B cell (primary cell): ENCODE measurements at regions of chr11 and their contacts with region 1.

Region 1: GRCh38 chr11:63652671-63653070 is 18.5 kb downstream of the ATL3 start:
- DNase-seq: no peak
- ATAC-seq: no peak
- H3K4me3 ChIP-seq: no peak overlapping the region
- H3K4me3 Mint-ChIP-seq: no peak overlapping the region
- H3K27ac ChIP-seq: no peak overlapping the region
- H3K27ac Mint-ChIP-seq: no peak overlapping the region
- H3K4me1 ChIP-seq: no peaks in the 10 kb centered on the region
- H3K4me1 Mint-ChIP-seq: peaks cover 2% of the 10 kb centered on the region
- H3K27me3 ChIP-seq: no peaks in the 10 kb centered on the region
- H3K27me3 Mint-ChIP-seq: no peaks in the 10 kb centered on the region
- CTCF ChIP-seq: no peak

Region 2: DNA sequence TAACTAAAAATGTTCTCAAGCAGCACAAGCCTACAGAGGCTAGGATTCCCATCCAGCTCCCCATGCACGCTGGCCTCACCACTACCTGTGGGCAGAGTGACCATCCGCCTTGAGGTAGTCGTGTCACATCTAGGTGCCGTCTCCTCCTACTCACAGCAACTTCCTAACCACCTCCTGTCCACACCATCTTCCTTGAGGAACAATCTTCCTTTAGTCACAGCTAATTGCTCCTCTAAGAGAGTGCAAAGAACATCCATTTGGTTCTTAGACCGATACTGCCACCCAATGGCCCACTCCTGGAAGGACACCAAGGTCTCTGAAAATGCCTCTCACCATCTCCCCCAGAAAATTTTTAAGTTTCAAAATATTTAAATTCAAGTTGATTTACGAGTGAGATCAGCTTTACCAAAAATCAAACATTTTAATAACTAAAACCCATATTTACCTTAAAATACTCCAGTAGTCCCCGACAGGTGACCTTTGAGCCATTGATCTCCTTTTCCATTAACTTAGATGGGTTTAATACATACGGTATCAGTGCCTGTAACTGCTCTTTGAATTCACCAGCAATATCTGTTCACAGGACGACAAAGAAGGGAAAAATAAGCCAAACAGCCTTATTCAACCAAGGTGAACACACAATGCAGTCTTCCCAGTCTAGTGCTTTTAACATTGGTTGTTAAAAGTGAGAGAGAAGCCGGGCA is 16.8 kb before region 1 on chr11:
- CTCF ChIA-PET with region 1: interaction called, 12 read pairs
- POLR2A ChIA-PET with region 1: no interaction called
- intact Hi-C with region 1: no loop called
- DNase-seq: peak; percentile 75
- ATAC-seq: peak; percentile 72
- H3K4me3 ChIP-seq: no peak overlapping the region
- H3K4me3 Mint-ChIP-seq: no peak overlapping the region
- H3K27ac ChIP-seq: no peak overlapping the region
- H3K27ac Mint-ChIP-seq: no peak overlapping the region
- H3K4me1 ChIP-seq: peaks cover 0 to 7% of the 10 kb centered on the region in 2 donors
- H3K4me1 Mint-ChIP-seq: peaks cover 7% of the 10 kb centered on the region
- H3K27me3 ChIP-seq: no peaks in the 10 kb centered on the region
- H3K27me3 Mint-ChIP-seq: no peaks in the 10 kb centered on the region
- CTCF ChIP-seq: peak; percentile 87

Region 3: DNA sequence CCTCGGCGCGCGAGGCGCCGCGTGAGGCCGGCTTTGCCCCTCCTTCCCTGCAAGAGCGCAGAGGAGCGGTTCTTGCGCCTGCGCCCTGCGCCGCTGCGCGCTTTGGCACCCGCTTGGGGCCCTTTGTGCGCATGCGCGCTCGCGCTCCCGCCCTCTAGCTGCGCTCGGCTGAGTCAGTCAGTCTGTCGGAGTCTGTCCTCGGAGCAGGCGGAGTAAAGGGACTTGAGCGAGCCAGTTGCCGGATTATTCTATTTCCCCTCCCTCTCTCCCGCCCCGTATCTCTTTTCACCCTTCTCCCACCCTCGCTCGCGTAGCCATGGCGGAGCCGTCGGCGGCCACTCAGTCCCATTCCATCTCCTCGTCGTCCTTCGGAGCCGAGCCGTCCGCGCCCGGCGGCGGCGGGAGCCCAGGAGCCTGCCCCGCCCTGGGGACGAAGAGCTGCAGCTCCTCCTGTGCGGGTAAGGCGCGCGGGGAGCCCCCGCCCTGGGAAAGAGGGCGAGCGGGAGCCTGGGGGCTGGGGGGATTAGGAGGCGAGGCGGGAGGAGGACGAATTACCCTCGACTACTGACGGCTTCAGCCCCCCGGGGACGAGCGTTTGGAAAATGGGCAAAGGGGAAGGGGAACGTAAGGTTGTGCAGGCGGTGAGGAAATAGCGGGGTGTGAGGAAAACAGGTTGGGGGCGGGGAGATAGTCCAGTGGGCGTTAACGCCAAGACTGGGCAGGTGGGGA is 28.8 kb after region 1 on chr11 and contains the start of gene RTN3:
- CTCF ChIA-PET with region 1: no interaction called
- POLR2A ChIA-PET with region 1: no interaction called
- intact Hi-C with region 1: no loop called
- DNase-seq: peak; percentile 99
- ATAC-seq: peak; percentile 92
- H3K4me3 ChIP-seq: peak within 1 kb of the TSS; percentile 75 to 98 (median 90)
- H3K4me3 Mint-ChIP-seq: peak within 1 kb of the TSS; percentile 95
- H3K27ac ChIP-seq: peak within 1 kb of the TSS; percentile 83 to 84
- H3K27ac Mint-ChIP-seq: peak within 1 kb of the TSS; percentile 97
- H3K4me1 ChIP-seq: peaks cover 15 to 16% of the 10 kb centered on the region in 2 donors
- H3K4me1 Mint-ChIP-seq: peaks cover 27% of the 10 kb centered on the region
- H3K27me3 ChIP-seq: no peaks in the 10 kb centered on the region
- H3K27me3 Mint-ChIP-seq: peaks cover 6% of the 10 kb centered on the region
- CTCF ChIP-seq: no peak
- total RNA-seq, gene RTN3: 20.1 and 24.9 TPM in 2 replicates